Pancreas (tissue), 10 donors: ENCODE measurements at regions of chr18 and their contacts with region 1.

Region 1: DNA sequence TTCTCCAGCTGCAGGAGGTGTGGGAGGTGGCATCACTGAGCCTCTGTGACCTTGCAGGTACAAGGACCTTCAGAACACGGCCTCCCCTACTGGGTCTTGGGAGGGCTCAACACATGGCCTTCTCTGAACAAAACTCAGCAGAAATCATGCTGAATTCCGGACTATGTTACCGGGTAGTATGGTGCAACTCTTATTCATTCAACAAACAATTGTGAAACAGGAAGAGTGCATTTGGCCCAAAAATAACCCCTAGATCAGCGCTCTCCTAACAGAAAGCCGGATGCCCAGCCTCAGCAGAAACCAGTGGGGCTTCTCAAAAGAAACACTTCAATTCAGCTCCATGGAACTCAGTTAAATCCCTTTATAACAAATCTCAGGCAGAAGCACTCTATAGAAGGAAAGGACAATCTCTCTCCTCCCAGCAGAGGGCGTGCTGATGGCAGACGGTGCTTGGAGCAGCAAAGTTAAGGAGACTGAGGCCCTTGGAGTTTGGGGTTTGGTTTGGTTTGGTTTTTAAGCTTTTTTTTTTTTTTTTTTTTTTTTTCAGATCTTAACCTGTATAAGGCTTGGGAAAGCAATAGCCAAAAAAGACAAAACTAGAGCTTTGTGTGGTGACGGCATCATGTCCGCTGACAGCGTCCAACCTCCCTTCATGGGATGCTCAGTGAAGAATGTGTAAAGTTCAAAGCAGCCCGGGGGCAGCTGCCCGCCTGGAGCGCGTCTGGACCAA is 104.2 kb upstream of the SALL3 start:
- DNase-seq: peak in 1 of 6 donors; percentile 28
- ATAC-seq: peak in 3 of 4 donors; percentile 53 to 69 (median 64)
- H3K4me3 ChIP-seq: no peak overlapping the region
- H3K27ac ChIP-seq: no peak overlapping the region
- H3K4me1 ChIP-seq: no peaks in the 10 kb centered on the region
- H3K27me3 ChIP-seq: no peaks in the 10 kb centered on the region
- CTCF ChIP-seq: peak; percentile 19 to 41 (median 34)

Region 2: DNA sequence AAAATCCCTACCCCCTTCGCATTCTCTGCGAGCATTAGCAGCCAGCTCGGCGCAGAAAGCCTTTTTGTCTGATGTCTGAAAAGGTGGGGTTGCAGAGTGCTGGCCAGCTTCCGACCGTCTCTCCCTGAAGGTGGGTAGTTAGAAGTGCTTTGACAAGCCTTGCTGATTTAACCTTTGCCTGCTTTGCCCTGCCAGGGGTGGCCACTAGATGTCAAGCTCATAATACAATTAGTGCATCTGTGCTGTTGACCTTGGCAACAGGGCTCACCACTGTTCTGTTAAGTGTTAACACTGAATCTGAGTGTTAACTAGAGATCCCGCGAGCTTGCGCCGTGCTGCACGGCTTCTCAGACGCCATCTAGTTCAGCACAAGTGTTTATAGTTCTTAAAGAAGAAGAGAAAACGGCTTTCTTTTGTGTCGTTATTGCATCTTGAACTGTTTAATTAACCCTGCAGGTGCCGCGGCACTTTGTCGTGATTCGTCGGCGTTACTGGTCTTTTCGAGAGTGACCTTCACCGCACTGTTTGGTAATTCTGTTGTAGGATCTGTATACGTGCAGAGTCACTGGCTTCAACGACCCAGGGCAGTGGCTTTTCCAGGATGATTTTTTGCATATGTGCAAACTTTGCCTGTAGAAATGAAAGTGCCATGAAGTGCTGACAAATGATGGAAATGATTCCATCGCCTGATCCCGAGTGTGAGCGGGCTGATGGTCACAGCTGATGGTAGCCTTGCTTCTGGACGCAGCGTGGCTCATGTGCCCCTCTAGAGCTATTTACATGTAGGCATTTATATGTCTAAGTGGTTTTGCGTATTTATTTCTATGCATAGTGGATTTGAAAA is 109.7 kb after region 1 on chr18:
- intact Hi-C with region 1: loop called in 1 of 3 experiments (anchors 10 kb)
- DNase-seq: no peak
- ATAC-seq: peak in 3 of 4 donors; percentile 54 to 71 (median 63)
- H3K4me3 ChIP-seq: no peak overlapping the region
- H3K27ac ChIP-seq: no peak overlapping the region
- H3K4me1 ChIP-seq: peaks cover 0 to 3% (median 0%) of the 10 kb centered on the region in 3 donors
- H3K27me3 ChIP-seq: peaks cover 10 to 79% (median 21%) of the 10 kb centered on the region in 4 donors
- CTCF ChIP-seq: no peak